Right ventricle myocardium inferior (tissue), 1 donor: ENCODE measurements at regions of chr16 and their contacts with region 1.

Region 1: DNA sequence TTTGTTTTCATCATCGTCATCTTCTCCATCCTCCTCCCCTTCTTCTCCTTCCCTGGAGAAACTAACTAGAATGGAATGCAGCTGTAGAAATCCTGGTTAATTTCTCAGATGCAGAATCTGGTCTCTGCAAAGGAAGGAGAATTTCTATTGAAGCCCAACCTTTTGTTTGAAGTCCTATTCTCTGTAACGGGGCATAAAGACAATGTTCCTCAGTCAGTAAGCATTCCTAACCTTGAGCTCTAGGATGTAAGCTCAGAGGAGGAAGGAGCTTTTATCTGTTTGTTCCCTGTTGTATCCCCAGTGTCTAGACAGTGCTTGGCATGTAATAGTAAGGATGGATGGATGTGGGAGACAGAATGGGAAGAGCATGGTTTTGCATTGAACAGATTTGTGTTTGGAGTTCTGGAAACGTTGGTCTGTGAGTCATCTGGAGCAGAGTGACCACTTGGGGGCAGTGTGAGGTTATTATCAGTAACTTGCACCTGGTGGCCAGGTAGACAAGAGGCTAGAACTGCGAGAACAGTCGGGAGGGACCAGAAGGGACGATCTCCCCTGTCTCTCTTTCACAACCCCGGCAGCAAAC is 363.7 kb downstream of the SNX29 start:
- DNase-seq: no peak
- ATAC-seq: no peak

Region 2: DNA sequence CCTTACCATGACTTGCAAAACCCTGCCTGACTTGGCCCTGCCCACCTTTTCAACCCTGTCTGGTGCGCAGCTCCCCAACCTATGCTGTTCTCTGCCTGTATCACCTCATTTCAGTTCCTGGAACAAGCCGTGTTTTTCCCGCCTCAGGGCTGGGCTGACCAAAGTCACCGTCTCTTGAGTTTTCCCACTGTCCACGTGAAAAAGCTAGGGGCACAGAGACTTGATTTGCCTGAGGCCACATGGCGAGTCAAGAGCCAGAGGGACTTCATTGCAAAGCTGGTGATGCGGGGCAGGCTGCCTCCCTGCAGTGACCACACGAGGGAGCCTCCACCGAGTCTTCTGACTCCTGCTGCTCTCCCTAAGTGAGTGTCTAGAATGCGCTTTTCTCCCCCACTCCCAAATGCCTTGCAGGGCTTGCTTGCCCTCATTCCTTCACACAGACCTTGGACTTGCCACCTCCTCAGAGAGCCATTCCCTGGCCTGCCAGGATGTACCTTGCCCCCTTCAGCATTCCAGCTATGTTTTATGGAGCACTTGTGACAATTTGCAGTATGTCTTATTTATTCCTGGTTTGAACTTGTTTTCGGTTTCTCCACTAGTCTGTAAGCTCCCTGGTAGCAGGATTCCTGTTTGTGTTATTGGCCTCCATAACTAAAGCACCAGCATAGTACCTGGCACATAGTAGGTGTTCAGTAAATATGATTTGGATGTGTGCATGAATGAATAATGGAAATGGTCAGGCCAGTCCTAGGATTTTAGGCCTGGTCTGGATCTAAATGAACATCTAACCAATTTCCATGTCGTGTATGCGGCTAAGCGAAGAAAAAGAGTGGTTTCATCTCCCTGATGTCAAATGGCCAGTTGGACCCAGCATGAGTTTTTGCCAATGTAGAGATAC is 111.4 kb before region 1 on chr16:
- intact Hi-C with region 1: loop called (anchors 5 kb)
- DNase-seq: peak; percentile 76
- ATAC-seq: peak; percentile 76

Region 3: DNA sequence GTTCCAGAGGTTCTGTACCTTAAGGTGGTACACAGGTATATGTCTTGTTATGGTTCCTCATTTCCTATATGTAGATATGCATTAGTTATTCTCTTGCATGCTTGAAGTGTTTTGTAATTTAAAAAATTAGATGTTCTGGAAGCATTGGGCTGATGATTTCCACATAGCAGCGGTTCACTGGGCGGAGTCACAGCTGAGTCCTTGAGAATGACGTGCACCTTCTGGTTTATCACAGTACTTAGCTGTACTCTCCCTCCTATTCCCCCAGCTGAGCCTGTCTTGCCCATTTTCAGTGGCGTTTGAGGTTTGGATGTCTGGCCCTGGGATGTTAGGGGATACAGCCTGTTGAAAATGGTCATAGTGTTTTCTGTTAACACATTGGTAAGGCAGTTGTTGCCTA is 36.6 kb before region 1 on chr16:
- intact Hi-C with region 1: loop called (anchors 5 kb)
- DNase-seq: no peak
- ATAC-seq: peak; percentile 65

Region 4: GRCh38 chr16:12406926-12407690 is 66.9 kb after region 1 on chr16:
- intact Hi-C with region 1: no loop called
- DNase-seq: no peak
- ATAC-seq: no peak